B cell (primary cell): ENCODE measurements at regions of chr5 and their contacts with region 1.

Region 1: GRCh38 chr5:142922223-142922952 is 152.2 kb downstream of the ARHGAP26 start:
- DNase-seq: peak; percentile 43
- ATAC-seq: peak; percentile 60
- H3K4me3 ChIP-seq: no peak overlapping the region
- H3K4me3 Mint-ChIP-seq: no peak overlapping the region
- H3K27ac ChIP-seq: no peak overlapping the region
- H3K27ac Mint-ChIP-seq: no peak overlapping the region
- H3K4me1 ChIP-seq: no peaks in the 10 kb centered on the region
- H3K4me1 Mint-ChIP-seq: peaks cover 7% of the 10 kb centered on the region
- H3K27me3 ChIP-seq: no peaks in the 10 kb centered on the region
- H3K27me3 Mint-ChIP-seq: no peaks in the 10 kb centered on the region
- CTCF ChIP-seq: peak; percentile 55

Region 2: DNA sequence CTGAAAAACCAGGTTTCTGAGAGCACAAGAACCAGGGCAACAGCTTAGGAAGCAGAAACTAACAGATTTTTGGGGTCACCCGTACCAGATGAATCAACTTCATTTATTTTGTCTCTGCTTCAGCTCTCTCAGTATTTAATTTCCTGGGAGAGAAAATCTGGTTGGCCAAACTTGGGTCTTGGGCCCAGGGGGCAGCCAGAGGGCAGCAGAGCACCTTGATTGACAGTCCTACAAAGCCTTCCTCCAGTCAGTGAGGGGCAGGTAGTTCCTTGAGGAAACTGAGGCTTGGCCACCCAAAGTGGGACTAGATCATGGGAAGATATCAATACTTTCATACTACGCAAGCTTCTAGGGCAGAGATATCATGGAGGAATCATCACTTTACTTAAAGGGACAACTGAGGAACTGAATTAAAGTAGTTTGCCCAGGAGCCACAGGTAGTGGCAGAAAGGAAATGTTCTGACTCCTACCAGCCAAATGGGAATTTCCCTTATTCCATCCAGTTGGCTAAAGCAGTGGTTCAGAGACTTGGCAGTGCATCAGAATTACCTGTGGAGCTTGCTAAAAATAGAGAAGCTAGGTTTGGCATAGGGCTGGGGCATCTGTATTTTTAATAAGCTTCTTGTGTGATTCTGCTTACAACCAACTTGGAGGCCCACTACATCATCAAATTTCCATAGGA is 173.7 kb before region 1 on chr5:
- CTCF ChIA-PET with region 1: interaction called, 14 read pairs
- POLR2A ChIA-PET with region 1: no interaction called
- intact Hi-C with region 1: no loop called
- DNase-seq: peak; percentile 74
- ATAC-seq: peak; percentile 68
- H3K4me3 ChIP-seq: no peak overlapping the region
- H3K4me3 Mint-ChIP-seq: no peak overlapping the region
- H3K27ac ChIP-seq: no peak overlapping the region
- H3K27ac Mint-ChIP-seq: no peak overlapping the region
- H3K4me1 ChIP-seq: no peaks in the 10 kb centered on the region
- H3K4me1 Mint-ChIP-seq: no peaks in the 10 kb centered on the region
- H3K27me3 ChIP-seq: no peaks in the 10 kb centered on the region
- H3K27me3 Mint-ChIP-seq: peaks cover 13% of the 10 kb centered on the region
- CTCF ChIP-seq: peak; percentile 80

Region 3: DNA sequence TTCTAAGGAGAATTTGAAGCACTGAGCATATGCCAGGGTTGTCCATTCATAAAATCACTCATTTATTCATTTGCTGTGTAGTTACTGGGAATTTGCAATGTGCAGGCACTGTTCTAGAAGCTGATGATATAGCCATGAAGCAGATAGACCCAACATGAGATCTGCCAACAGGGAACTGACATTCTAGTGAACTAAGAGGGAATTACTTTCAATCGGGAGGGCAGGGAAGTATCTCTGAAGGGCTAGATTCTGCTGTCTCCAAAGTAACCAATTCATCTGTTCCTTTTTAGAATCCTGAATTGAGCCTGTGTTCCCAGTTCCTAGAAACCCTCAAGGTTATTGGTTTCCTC is 163.6 kb before region 1 on chr5:
- CTCF ChIA-PET with region 1: no interaction called
- POLR2A ChIA-PET with region 1: no interaction called
- intact Hi-C with region 1: no loop called
- DNase-seq: no peak
- ATAC-seq: no peak
- H3K4me3 ChIP-seq: no peak overlapping the region
- H3K4me3 Mint-ChIP-seq: no peak overlapping the region
- H3K27ac ChIP-seq: no peak overlapping the region
- H3K27ac Mint-ChIP-seq: no peak overlapping the region
- H3K4me1 ChIP-seq: no peaks in the 10 kb centered on the region
- H3K4me1 Mint-ChIP-seq: no peaks in the 10 kb centered on the region
- H3K27me3 ChIP-seq: no peaks in the 10 kb centered on the region
- H3K27me3 Mint-ChIP-seq: peaks cover 7% of the 10 kb centered on the region
- CTCF ChIP-seq: no peak

Region 4: GRCh38 chr5:142821733-142822487 is 100.5 kb before region 1 on chr5:
- CTCF ChIA-PET with region 1: no interaction called
- POLR2A ChIA-PET with region 1: no interaction called
- intact Hi-C with region 1: no loop called
- DNase-seq: no peak
- ATAC-seq: no peak
- H3K4me3 ChIP-seq: no peak overlapping the region
- H3K4me3 Mint-ChIP-seq: no peak overlapping the region
- H3K27ac ChIP-seq: no peak overlapping the region
- H3K27ac Mint-ChIP-seq: no peak overlapping the region
- H3K4me1 ChIP-seq: peaks cover 0 to under 1% of the 10 kb centered on the region in 2 donors
- H3K4me1 Mint-ChIP-seq: no peaks in the 10 kb centered on the region
- H3K27me3 ChIP-seq: no peaks in the 10 kb centered on the region
- H3K27me3 Mint-ChIP-seq: no peaks in the 10 kb centered on the region
- CTCF ChIP-seq: no peak

Region 5: GRCh38 chr5:142946547-142947426 is 24.4 kb after region 1 on chr5:
- CTCF ChIA-PET with region 1: no interaction called
- POLR2A ChIA-PET with region 1: no interaction called
- intact Hi-C with region 1: no loop called
- DNase-seq: no peak
- ATAC-seq: no peak
- H3K4me3 ChIP-seq: no peak overlapping the region
- H3K4me3 Mint-ChIP-seq: no peak overlapping the region
- H3K27ac ChIP-seq: no peak overlapping the region
- H3K27ac Mint-ChIP-seq: no peak overlapping the region
- H3K4me1 ChIP-seq: peaks cover 0 to 4% of the 10 kb centered on the region in 2 donors
- H3K4me1 Mint-ChIP-seq: peaks cover 8% of the 10 kb centered on the region
- H3K27me3 ChIP-seq: no peaks in the 10 kb centered on the region
- H3K27me3 Mint-ChIP-seq: no peaks in the 10 kb centered on the region
- CTCF ChIP-seq: no peak

Region 6: GRCh38 chr5:143008809-143009521 is 86.6 kb after region 1 on chr5:
- CTCF ChIA-PET with region 1: interaction called, 30 read pairs
- POLR2A ChIA-PET with region 1: no interaction called
- intact Hi-C with region 1: loop called (anchors 1 kb)
- DNase-seq: peak; percentile 83
- ATAC-seq: peak; percentile 76
- H3K4me3 ChIP-seq: no peak overlapping the region
- H3K4me3 Mint-ChIP-seq: peak overlapping the region; percentile 4
- H3K27ac ChIP-seq: no peak overlapping the region
- H3K27ac Mint-ChIP-seq: peak overlapping the region; percentile 78
- H3K4me1 ChIP-seq: peaks cover 27 to 31% of the 10 kb centered on the region in 2 donors
- H3K4me1 Mint-ChIP-seq: peaks cover 58% of the 10 kb centered on the region
- H3K27me3 ChIP-seq: no peaks in the 10 kb centered on the region
- H3K27me3 Mint-ChIP-seq: no peaks in the 10 kb centered on the region
- CTCF ChIP-seq: peak; percentile 26

Region 7: DNA sequence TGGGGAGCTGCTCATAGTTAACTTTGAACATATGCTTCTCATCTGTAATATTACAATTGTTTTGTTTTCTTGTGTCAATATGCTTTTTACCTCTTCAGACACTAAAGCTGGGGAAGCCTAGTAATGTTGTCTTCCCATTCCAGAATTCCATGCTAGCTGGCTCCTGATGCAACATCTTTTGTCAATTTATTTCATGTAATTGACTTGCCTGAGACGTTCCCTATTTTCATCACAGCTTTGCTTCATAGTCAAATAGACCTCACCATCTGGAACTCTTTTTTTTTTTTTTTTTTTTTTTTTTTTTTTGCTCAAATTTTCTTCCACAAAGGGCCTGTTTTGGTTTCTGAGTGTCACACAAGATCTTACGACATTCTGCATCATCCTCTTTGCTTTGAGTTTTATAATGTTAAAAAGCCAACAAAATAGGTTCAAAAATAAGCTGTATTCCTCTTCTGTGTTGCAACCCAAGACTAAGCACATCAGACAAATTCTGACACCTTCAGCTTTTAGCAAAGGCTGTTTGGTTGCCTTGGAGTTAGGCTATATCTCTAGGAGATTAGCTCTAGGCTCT is 245.9 kb after region 1 on chr5:
- CTCF ChIA-PET with region 1: no interaction called
- POLR2A ChIA-PET with region 1: no interaction called
- intact Hi-C with region 1: no loop called
- DNase-seq: no peak
- ATAC-seq: no peak
- H3K4me3 ChIP-seq: no peak overlapping the region
- H3K4me3 Mint-ChIP-seq: no peak overlapping the region
- H3K27ac ChIP-seq: no peak overlapping the region
- H3K27ac Mint-ChIP-seq: no peak overlapping the region
- H3K4me1 ChIP-seq: peaks cover 5 to 7% of the 10 kb centered on the region in 2 donors
- H3K4me1 Mint-ChIP-seq: peaks cover 11% of the 10 kb centered on the region
- H3K27me3 ChIP-seq: no peaks in the 10 kb centered on the region
- H3K27me3 Mint-ChIP-seq: no peaks in the 10 kb centered on the region
- CTCF ChIP-seq: no peak

Region 8: DNA sequence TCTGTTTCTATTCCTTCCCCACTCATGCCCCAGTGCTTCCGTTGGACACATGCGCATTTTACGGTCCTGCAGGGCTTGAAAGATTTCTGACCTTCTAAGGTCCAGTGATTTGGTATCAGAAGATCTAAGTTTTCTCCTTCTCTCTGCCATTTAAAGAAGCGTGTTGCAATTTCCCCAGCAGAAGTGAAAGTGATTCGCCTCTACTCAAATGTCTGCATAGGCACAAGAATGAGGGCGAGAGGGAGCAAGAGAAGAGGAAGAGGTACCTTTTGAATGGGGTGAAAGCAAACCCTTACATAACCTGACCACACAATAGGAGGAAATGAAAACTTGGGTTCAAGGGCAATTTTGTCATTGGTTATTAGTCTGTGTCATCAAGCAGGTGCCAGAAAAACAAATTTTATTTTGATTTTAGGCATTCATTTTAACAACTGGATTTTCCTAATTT is 512.8 kb after region 1 on chr5:
- CTCF ChIA-PET with region 1: interaction called, 3 read pairs
- POLR2A ChIA-PET with region 1: no interaction called
- intact Hi-C with region 1: loop called (anchors 2 kb)
- DNase-seq: peak; percentile 88
- ATAC-seq: peak; percentile 85
- H3K4me3 ChIP-seq: peak overlapping the region; percentile 42 to 81 (median 68)
- H3K4me3 Mint-ChIP-seq: peak overlapping the region; percentile 94
- H3K27ac ChIP-seq: peak overlapping the region; percentile 90 to 93
- H3K27ac Mint-ChIP-seq: peak overlapping the region; percentile 97
- H3K4me1 ChIP-seq: peaks cover 28 to 31% of the 10 kb centered on the region in 2 donors
- H3K4me1 Mint-ChIP-seq: peaks cover 65% of the 10 kb centered on the region
- H3K27me3 ChIP-seq: no peaks in the 10 kb centered on the region
- H3K27me3 Mint-ChIP-seq: no peaks in the 10 kb centered on the region
- CTCF ChIP-seq: no peak

Region 9: DNA sequence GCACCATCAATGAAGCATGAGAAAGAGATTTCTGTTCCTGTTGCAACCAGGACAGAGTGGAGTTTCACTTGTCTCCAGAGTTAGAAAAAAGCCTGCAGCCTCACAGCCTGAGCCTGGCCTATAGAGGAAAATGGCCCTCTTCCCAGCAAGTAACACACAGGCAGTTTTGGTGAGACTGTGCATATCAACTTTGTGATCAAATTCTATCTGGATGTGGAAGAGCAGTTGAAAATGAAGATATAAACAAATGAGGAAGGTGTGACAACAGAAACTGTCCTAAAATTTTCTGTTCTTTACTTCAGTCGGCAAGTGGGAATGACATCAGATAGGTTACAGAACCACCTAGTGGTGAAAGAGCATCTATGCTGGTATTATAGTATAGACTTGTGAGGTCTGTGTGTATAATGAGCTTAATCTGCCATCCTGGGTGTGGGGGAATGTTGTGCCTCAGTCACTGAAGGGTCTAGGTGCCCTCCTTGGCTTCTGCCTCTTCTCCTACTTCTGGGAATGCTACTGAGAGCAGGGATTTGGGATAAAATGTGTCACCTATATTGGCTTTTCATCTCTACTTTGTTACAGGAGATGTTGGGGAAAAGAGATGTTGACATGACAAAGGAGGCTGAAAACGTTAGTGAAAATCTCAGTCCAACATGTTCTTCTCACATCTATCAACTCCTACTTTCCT is 1219.9 kb after region 1 on chr5:
- CTCF ChIA-PET with region 1: interaction called, 9 read pairs
- POLR2A ChIA-PET with region 1: no interaction called
- intact Hi-C with region 1: loop called (anchors 1 kb)
- DNase-seq: peak; percentile 57
- ATAC-seq: peak; percentile 88
- H3K4me3 ChIP-seq: no peak overlapping the region
- H3K4me3 Mint-ChIP-seq: peak overlapping the region; percentile 30
- H3K27ac ChIP-seq: no peak overlapping the region
- H3K27ac Mint-ChIP-seq: peak overlapping the region; percentile 70
- H3K4me1 ChIP-seq: peaks cover 12 to 13% of the 10 kb centered on the region in 2 donors
- H3K4me1 Mint-ChIP-seq: peaks cover 16% of the 10 kb centered on the region
- H3K27me3 ChIP-seq: no peaks in the 10 kb centered on the region
- H3K27me3 Mint-ChIP-seq: peaks cover 12% of the 10 kb centered on the region
- CTCF ChIP-seq: peak; percentile 67